Endothelial cell of umbilical vein (primary cell): ENCODE measurements at regions of chr12 and their contacts with region 1.

Region 1: GRCh38 chr12:124518051-124518932 is 49.1 kb downstream of the NCOR2 start:
- DNase-seq: peak; percentile 99
- H3K4me3 ChIP-seq: peak overlapping the region in 1 of 3 experiments; percentile 19
- H3K27ac ChIP-seq: peak overlapping the region; percentile 91
- H3K4me1 ChIP-seq: peaks cover 64% of the 10 kb centered on the region
- H3K27me3 ChIP-seq: no peaks in the 10 kb centered on the region
- CTCF ChIP-seq: no peak
- POLR2A ChIP-seq: no peak

Region 2: GRCh38 chr12:124379938-124380754 is 138.1 kb before region 1 on chr12:
- CTCF ChIA-PET with region 1: interaction called, 8 read pairs
- POLR2A ChIA-PET with region 1: no interaction called
- dilution Hi-C with region 1: no loop called
- intact Hi-C with region 1: loop called (anchors 2 kb)
- DNase-seq: peak; percentile 93
- H3K4me3 ChIP-seq: no peak overlapping the region
- H3K27ac ChIP-seq: peak overlapping the region; percentile 93
- H3K4me1 ChIP-seq: peaks cover 62% of the 10 kb centered on the region
- H3K27me3 ChIP-seq: no peaks in the 10 kb centered on the region
- CTCF ChIP-seq: peak; percentile 43 to 54
- POLR2A ChIP-seq: peak; percentile 80

Region 3: DNA sequence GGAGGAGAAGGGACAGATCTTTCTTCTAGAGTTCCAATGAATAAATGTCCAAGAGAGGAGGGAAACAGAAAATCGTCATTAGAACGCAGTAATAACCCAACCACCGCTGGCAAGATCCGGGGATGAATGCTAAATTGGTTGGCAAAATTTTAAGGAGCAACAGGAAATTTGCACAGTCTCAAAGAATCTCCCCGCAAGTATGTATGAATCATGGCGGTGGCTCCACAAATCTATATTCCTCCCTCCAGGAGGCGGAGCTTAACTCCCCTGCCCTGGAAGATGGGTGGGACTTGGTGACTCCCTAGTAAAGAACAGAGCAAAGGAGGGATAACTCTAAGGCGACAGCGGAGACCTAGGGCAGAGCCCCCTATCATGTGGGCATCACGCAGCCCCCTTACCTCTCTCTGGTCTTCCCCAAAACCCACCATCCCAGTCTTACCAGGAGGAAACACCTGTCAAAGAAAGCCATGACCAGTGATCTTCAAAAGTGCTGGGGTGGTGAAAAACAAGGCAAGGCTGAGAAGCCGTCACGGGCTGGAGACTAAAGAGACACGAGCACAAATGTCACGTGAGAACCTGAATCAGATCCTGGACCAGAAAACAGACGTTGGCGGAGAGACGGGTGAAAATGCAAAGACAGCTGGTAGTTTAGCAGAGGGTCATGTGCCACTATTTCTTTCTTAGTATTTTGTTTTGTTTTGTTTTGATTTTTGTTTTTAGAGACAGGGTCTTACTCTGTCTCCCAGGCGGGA is 76.7 kb before region 1 on chr12:
- CTCF ChIA-PET with region 1: interaction called, 6 read pairs
- POLR2A ChIA-PET with region 1: no interaction called
- dilution Hi-C with region 1: no loop called
- intact Hi-C with region 1: loop called (anchors 1 kb)
- DNase-seq: peak; percentile 83
- H3K4me3 ChIP-seq: peak overlapping the region in 1 of 3 experiments; percentile 5
- H3K27ac ChIP-seq: peak overlapping the region; percentile 89
- H3K4me1 ChIP-seq: peaks cover 27% of the 10 kb centered on the region
- H3K27me3 ChIP-seq: no peaks in the 10 kb centered on the region
- CTCF ChIP-seq: no peak
- POLR2A ChIP-seq: peak; percentile 56

Region 4: DNA sequence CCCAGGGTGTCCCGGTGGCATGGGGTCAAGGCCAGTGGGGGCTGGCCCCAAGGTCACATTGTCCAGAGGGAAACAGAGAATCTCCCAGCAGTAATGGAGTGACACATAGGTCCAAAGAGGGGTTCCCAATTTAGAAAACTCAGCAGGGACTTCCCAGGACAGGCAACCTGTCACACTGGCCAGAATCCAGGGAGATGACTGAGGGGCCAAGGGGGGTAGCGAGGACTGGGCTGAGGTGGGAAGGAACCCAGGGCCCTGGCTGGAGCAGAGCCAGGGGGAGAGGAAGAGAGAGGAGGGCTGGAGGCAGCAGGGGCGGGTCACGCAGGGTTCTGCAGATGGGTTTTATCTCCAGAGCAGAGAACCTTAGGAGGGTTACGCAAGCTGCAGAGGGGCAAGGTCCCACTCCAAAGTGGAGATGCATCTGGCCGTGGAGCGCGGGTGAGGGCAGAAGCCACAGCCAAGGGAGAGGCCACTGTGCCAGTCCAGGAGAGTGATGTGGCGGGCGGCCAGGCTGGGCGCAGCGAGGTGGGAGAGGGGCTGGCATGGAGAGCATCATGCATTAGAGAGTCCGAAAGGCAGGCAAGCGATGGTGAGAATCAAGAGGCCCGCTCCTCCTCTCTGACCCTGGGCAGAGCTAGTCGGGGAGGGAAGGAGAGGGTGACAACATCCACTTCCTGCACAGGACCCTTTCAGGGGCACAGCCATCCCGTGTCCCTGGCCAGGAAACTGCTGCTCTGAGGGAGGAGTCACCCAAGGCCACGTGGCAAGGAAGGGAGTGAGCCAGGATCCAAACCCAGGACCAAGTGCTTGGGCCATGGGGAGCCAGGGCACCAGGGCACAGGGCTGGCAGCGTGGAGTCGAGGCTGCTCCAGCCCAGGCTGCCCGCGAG is 20.1 kb after region 1 on chr12:
- CTCF ChIA-PET with region 1: interaction called, 3 read pairs
- POLR2A ChIA-PET with region 1: interaction called, 6 read pairs
- dilution Hi-C with region 1: no loop called
- intact Hi-C with region 1: loop called (anchors 2 kb)
- DNase-seq: no peak
- H3K4me3 ChIP-seq: no peak overlapping the region
- H3K27ac ChIP-seq: no peak overlapping the region
- H3K4me1 ChIP-seq: peaks cover 14% of the 10 kb centered on the region
- H3K27me3 ChIP-seq: no peaks in the 10 kb centered on the region
- CTCF ChIP-seq: no peak
- POLR2A ChIP-seq: no peak

Region 5: DNA sequence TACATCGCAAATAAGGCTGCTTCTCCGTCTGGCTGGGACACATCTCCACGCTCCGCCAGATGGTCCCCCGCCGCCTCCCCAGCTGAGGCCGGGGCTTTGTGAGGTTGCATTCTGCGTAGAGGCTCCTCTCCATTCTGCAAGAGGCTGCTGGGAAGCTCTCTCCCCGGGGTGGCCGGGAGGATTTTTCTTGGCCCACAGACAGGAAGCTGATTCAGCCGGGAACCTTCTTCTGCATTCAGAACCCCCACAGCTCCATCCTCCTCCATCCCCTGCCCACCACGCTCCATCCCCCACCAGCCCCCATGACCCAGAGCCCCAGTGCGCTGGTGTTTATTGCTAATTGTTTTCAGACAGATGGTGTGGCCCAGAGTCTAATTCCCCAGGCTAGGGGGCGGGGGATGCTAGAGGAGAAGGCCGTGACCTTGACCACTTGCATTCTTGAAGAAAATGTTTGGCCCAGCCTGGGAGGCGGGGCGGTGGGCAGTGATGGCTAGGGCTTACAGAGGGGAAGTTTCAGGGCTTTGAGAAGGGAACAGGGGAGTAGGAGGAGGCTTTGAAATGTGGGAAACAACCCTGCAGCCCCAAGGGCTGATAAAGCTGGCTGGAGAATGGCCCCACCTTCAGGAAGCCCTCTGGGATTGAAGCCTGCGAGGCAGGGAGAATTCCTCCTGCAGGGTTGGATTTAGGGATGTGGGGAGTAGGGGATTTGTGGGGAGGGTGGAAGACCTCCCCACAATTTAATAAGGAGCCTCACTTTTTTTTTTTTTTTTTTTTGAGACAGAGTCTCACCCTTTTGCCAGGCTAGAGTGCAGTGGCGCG is 137.6 kb after region 1 on chr12:
- CTCF ChIA-PET with region 1: interaction called, 4 read pairs
- POLR2A ChIA-PET with region 1: interaction called, 3 read pairs
- dilution Hi-C with region 1: no loop called
- intact Hi-C with region 1: loop called (anchors 1 kb)
- DNase-seq: peak; percentile 87
- H3K4me3 ChIP-seq: no peak overlapping the region
- H3K27ac ChIP-seq: peak overlapping the region; percentile 91
- H3K4me1 ChIP-seq: peaks cover 51% of the 10 kb centered on the region
- H3K27me3 ChIP-seq: no peaks in the 10 kb centered on the region
- CTCF ChIP-seq: no peak
- POLR2A ChIP-seq: no peak

Region 6: DNA sequence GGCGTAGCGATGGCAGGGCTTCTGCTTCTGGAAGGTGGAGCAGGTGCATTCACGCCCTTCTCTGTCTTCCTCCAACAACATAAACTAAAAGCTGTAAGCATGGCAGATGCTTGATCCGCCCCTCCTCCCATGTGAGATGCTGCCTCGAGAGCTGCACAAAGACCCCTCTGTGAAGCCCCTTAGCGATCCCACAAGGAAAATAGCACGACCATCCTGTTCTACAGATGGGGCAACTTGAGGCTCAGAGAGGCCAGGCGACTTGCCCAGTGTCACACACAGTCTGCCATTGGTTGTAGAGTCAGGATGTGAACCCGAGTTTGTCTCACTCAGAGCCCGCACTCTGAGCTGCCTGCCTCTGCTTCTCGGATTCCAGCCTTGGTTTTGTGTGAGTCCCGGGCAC is 200.9 kb after region 1 on chr12:
- CTCF ChIA-PET with region 1: no interaction called
- POLR2A ChIA-PET with region 1: no interaction called
- dilution Hi-C with region 1: no loop called
- intact Hi-C with region 1: no loop called
- DNase-seq: no peak
- H3K4me3 ChIP-seq: no peak overlapping the region
- H3K27ac ChIP-seq: no peak overlapping the region
- H3K4me1 ChIP-seq: peaks cover 30% of the 10 kb centered on the region
- H3K27me3 ChIP-seq: no peaks in the 10 kb centered on the region
- CTCF ChIP-seq: no peak
- POLR2A ChIP-seq: no peak

Region 7: GRCh38 chr12:124745891-124746570 is 227.7 kb after region 1 on chr12:
- CTCF ChIA-PET with region 1: interaction called, 3 read pairs
- POLR2A ChIA-PET with region 1: no interaction called
- dilution Hi-C with region 1: no loop called
- intact Hi-C with region 1: loop called (anchors 1 kb)
- DNase-seq: peak; percentile 94
- H3K4me3 ChIP-seq: no peak overlapping the region
- H3K27ac ChIP-seq: peak overlapping the region; percentile 78
- H3K4me1 ChIP-seq: peaks cover 31% of the 10 kb centered on the region
- H3K27me3 ChIP-seq: no peaks in the 10 kb centered on the region
- CTCF ChIP-seq: no peak
- POLR2A ChIP-seq: peak; percentile 45